Heart right ventricle (tissue), 16 donors: ENCODE measurements at regions of chr11 and their contacts with region 1.

Region 1: GRCh38 chr11:69360606-69361005 is 66.7 kb downstream of the MYEOV start:
- DNase-seq: no peak
- ATAC-seq: no peak
- H3K4me3 ChIP-seq: no peak overlapping the region
- H3K27ac ChIP-seq: no peak overlapping the region
- H3K4me1 ChIP-seq: no peaks in the 10 kb centered on the region
- H3K27me3 ChIP-seq: no peaks in the 10 kb centered on the region
- CTCF ChIP-seq: no peak

Region 2: GRCh38 chr11:69200331-69201065 is 160.1 kb before region 1 on chr11:
- intact Hi-C with region 1: no loop called
- DNase-seq: peak; percentile 40 to 72
- ATAC-seq: peak; percentile 53 to 85 (median 68)
- H3K4me3 ChIP-seq: no peak overlapping the region
- H3K27ac ChIP-seq: no peak overlapping the region
- H3K4me1 ChIP-seq: peaks cover 3 to 21% (median 11%) of the 10 kb centered on the region in 9 donors
- H3K27me3 ChIP-seq: peaks cover 0 to 7% (median 0%) of the 10 kb centered on the region in 7 donors
- CTCF ChIP-seq: no peak

Region 3: DNA sequence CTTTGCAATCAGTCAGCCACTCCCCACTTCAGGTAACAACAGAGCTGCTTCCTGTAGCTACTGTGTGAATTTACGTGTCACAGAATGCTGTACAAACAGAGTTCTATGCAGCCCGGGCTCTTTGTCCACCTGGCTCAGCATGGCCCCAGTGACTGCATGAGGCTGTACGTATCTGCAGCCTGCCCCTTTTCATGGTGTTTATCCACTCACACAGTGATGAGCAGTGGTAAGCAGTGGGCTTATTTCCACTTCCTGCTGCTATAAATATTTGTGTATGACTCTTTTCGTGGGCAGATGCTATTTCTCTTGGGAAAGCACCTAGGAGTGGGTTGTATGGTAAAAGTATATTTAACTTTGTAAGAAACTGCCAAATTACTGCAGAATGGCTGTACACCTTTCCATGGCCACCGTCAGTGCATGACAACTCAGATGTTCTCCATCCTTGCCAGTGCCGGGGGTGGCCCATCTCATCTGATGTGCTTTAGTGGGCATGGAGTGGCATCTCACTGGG is 23.3 kb before region 1 on chr11:
- intact Hi-C with region 1: loop called in 1 of 10 experiments (anchors 1 kb)
- DNase-seq: no peak
- ATAC-seq: no peak
- H3K4me3 ChIP-seq: no peak overlapping the region
- H3K27ac ChIP-seq: no peak overlapping the region
- H3K4me1 ChIP-seq: peaks cover 0 to 4% (median 0%) of the 10 kb centered on the region in 9 donors
- H3K27me3 ChIP-seq: no peaks in the 10 kb centered on the region
- CTCF ChIP-seq: no peak

Region 4: DNA sequence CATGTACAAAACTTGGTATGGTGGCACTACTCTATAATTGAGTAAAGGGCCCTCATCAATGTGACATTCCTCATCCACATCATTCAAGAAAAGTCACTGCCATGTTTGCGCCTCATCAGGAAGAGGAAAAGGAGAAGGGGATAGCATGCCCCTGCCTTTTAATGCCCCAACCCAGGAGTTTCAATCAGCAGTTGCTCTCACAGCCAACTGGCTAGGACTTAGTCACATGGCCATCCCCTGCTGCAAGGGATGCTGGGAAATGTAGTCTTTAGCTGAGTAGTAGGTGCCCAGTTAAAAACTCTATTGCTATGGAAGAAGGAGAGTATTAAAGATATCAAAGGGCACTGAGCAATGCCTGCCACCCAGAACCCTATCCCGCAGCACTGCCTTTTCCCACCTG is 269.4 kb after region 1 on chr11:
- intact Hi-C with region 1: no loop called
- DNase-seq: no peak
- ATAC-seq: no peak
- H3K4me3 ChIP-seq: no peak overlapping the region
- H3K27ac ChIP-seq: no peak overlapping the region
- H3K4me1 ChIP-seq: peaks cover 0 to 10% (median 0%) of the 10 kb centered on the region in 9 donors
- H3K27me3 ChIP-seq: peaks cover 0 to 6% (median 0%) of the 10 kb centered on the region in 7 donors
- CTCF ChIP-seq: no peak